ENCODE measurements at regions of chr7 and their contacts with region 1.

Region 1: GRCh38 chr7:40299097-40299496 is 164.3 kb downstream of the SUGCT start:
- DNase-seq: no peak
- ATAC-seq: no peak
- H3K4me3 ChIP-seq: no peak overlapping the region
- H3K27ac ChIP-seq: no peak overlapping the region
- H3K4me1 ChIP-seq: no peaks in the 10 kb centered on the region
- H3K27me3 ChIP-seq: no peaks in the 10 kb centered on the region
- CTCF ChIP-seq: no peak
- POLR2A ChIP-seq: no peak

Region 2: GRCh38 chr7:40232242-40232893 is 66.7 kb before region 1 on chr7:
- intact Hi-C with region 1: loop called (anchors 10 kb)
- DNase-seq: peak in 3 of 4 donors; percentile 20 to 54 (median 43)
- ATAC-seq: no peak
- H3K4me3 ChIP-seq: no peak overlapping the region
- H3K27ac ChIP-seq: no peak overlapping the region
- H3K4me1 ChIP-seq: peaks cover 13% of the 10 kb centered on the region
- H3K27me3 ChIP-seq: no peaks in the 10 kb centered on the region
- CTCF ChIP-seq: peak in 6 of 7 experiments; percentile 38 to 67 (median 53)
- POLR2A ChIP-seq: no peak

Measured in body of pancreas (tissue), 4 donors.